Dendritic cell treated with granulocyte-macrophage colony-stimulating factor and Interleukin-4, amounts not matched to agents 40 ng/mL and 50 ng/mL, for 4 days (primary cell): ENCODE measurements at regions of chr5 and their contacts with region 1.

Region 1: DNA sequence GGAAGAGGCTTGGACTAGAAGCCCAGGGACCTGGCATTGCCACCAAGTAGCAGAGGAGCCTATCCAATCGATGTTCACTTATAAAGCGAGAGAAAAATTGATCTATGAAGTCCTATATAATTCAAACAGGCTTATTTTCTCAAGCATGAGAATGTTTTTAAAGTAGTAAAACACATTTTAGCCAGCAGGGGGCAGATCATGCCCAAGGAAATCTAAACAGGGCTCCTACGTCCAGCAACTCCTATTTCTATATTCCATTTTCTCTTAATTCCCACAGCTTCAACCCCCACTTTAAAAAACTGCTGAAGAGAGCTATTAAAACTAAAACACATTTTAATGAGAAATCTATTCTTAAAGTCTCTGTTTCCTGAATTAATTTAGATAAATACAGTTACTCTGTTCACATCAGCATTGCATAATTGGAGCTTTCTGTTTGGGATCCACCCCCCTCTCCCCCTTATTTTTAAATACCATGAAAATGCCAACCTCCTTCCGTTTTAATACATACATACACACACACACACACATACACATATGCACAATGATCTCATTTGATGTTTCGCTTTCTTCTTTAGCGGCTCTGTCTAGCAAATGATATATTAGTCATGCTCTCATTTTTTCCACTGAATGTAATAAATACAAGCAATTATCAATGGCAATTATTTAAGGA is 144.9 kb downstream of the MYO10 start:
- H3K4me3 Mint-ChIP-seq: no peak overlapping the region
- H3K27ac Mint-ChIP-seq: no peak overlapping the region
- H3K4me1 Mint-ChIP-seq: peaks cover 10% of the 10 kb centered on the region
- H3K27me3 Mint-ChIP-seq: no peaks in the 10 kb centered on the region

Region 2: GRCh38 chr5:17189381-17190036 is 398.3 kb after region 1 on chr5:
- intact Hi-C with region 1: loop called (anchors 1 kb)
- H3K4me3 Mint-ChIP-seq: no peak overlapping the region
- H3K27ac Mint-ChIP-seq: no peak overlapping the region
- H3K4me1 Mint-ChIP-seq: no peaks in the 10 kb centered on the region
- H3K27me3 Mint-ChIP-seq: peaks cover 2% of the 10 kb centered on the region

Region 3: DNA sequence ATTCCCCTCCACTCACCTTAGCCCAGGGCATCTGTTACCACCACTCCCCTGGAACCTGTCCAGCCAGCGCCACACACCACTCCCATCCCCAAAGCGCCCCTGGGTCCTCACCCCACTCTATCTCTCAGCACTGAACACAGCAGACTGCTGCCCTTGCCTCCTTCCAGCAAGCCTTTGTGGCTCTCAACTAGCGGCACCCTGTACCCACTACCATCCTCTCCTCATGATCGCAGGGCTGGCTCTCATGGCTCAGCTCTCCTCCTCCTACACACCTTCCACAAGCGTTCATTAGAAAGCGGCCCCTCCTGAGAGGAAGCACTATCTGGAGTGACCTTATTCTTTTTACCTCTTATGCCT is 412.9 kb after region 1 on chr5:
- intact Hi-C with region 1: loop called (anchors 1 kb)
- H3K4me3 Mint-ChIP-seq: no peak overlapping the region
- H3K27ac Mint-ChIP-seq: no peak overlapping the region
- H3K4me1 Mint-ChIP-seq: no peaks in the 10 kb centered on the region
- H3K27me3 Mint-ChIP-seq: peaks cover 10% of the 10 kb centered on the region

Region 4: GRCh38 chr5:18314192-18314778 is 1523.1 kb after region 1 on chr5:
- intact Hi-C with region 1: loop called (anchors 10 kb)
- H3K4me3 Mint-ChIP-seq: no peak overlapping the region
- H3K27ac Mint-ChIP-seq: no peak overlapping the region
- H3K4me1 Mint-ChIP-seq: peaks cover 14% of the 10 kb centered on the region
- H3K27me3 Mint-ChIP-seq: no peaks in the 10 kb centered on the region